Activated B cell treated with CpG ODN at 0.5 μM for 24 hours (primary cell): ENCODE measurements at regions of chr11 and their contacts with region 1.

Region 1: GRCh38 chr11:119067371-119068222 is at the start of gene VPS11:
- DNase-seq: peak; percentile 94
- ATAC-seq: peak; percentile 97
- H3K4me3 Mint-ChIP-seq: peak within 1 kb of the TSS; percentile 98
- H3K27ac Mint-ChIP-seq: peak within 1 kb of the TSS; percentile 98
- H3K4me1 Mint-ChIP-seq: peaks cover 34% of the 10 kb centered on the region
- H3K27me3 Mint-ChIP-seq: no peaks in the 10 kb centered on the region
- CTCF ChIP-seq: no peak
- total RNA-seq, gene VPS11: 49.6 and 53.6 TPM in 2 replicates

Region 2: GRCh38 chr11:119018074-119018938 is 49.3 kb before region 1 on chr11 and contains the starts of genes RPS25 and TRAPPC4:
- CTCF ChIA-PET with region 1: interaction called, 3 read pairs
- POLR2A ChIA-PET with region 1: interaction called, 23 read pairs
- intact Hi-C with region 1: loop called (anchors 1 kb)
- DNase-seq: peak; percentile 90
- ATAC-seq: peak; percentile 87
- H3K4me3 Mint-ChIP-seq: peak within 1 kb of the TSS; percentile 99
- H3K27ac Mint-ChIP-seq: peak within 1 kb of the TSS; percentile 100
- H3K4me1 Mint-ChIP-seq: peaks cover 54% of the 10 kb centered on the region
- H3K27me3 Mint-ChIP-seq: no peaks in the 10 kb centered on the region
- CTCF ChIP-seq: no peak
- total RNA-seq, gene RPS25: 2,191 and 2,534 TPM in 2 replicates
- total RNA-seq, gene TRAPPC4: 56.8 and 60.1 TPM in 2 replicates

Region 3: GRCh38 chr11:119051440-119052162 is 16.0 kb before region 1 on chr11:
- CTCF ChIA-PET with region 1: interaction called, 9 read pairs
- POLR2A ChIA-PET with region 1: interaction called, 62 read pairs
- intact Hi-C with region 1: loop called (anchors 2 kb)
- DNase-seq: peak; percentile 47
- ATAC-seq: peak; percentile 85
- H3K4me3 Mint-ChIP-seq: peak overlapping the region; percentile 39
- H3K27ac Mint-ChIP-seq: peak overlapping the region; percentile 71
- H3K4me1 Mint-ChIP-seq: peaks cover 40% of the 10 kb centered on the region
- H3K27me3 Mint-ChIP-seq: no peaks in the 10 kb centered on the region
- CTCF ChIP-seq: no peak

Region 4: DNA sequence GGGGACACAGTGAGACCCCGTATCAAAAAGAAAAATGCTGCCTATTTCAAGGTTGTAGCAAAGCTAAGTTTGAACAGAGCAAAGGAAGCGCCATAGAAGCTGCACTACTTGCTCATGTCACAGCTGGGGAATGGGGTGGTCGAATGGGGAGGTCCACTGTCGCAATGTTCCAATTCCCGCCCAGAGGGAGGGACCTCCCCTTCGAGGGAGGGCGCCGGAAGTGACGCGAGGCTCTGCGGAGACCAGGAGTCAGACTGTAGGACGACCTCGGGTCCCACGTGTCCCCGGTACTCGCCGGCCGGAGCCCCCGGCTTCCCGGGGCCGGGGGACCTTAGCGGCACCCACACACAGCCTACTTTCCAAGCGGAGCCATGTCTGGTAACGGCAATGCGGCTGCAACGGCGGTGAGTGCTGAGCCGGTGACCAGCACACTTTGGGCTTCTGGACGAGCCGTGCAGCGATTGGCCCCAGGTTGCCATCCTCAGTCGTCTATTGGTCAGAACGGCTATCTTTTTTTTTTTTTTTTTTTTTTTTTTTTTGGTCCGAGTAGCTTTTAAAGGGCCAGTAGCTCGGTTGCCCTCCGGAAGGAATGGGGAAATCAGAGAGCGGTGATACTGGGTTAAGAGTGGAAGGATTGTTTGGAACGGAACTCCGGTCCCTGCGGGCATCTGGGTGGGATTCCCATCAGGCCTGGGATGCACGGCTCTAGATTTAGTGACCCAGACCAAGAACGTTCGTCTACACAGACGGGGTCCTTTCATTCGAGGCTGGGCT is 17.3 kb after region 1 on chr11 and contains the start of gene HMBS:
- CTCF ChIA-PET with region 1: interaction called, 3 read pairs
- POLR2A ChIA-PET with region 1: interaction called, 40 read pairs
- intact Hi-C with region 1: loop called (anchors 1 kb)
- DNase-seq: peak; percentile 92
- ATAC-seq: peak; percentile 90
- H3K4me3 Mint-ChIP-seq: peak within 1 kb of the TSS; percentile 95
- H3K27ac Mint-ChIP-seq: peak within 1 kb of the TSS; percentile 93
- H3K4me1 Mint-ChIP-seq: peaks cover 12% of the 10 kb centered on the region
- H3K27me3 Mint-ChIP-seq: no peaks in the 10 kb centered on the region
- CTCF ChIP-seq: no peak
- total RNA-seq, gene HMBS: 17.5 and 26.9 TPM in 2 replicates

Region 5: DNA sequence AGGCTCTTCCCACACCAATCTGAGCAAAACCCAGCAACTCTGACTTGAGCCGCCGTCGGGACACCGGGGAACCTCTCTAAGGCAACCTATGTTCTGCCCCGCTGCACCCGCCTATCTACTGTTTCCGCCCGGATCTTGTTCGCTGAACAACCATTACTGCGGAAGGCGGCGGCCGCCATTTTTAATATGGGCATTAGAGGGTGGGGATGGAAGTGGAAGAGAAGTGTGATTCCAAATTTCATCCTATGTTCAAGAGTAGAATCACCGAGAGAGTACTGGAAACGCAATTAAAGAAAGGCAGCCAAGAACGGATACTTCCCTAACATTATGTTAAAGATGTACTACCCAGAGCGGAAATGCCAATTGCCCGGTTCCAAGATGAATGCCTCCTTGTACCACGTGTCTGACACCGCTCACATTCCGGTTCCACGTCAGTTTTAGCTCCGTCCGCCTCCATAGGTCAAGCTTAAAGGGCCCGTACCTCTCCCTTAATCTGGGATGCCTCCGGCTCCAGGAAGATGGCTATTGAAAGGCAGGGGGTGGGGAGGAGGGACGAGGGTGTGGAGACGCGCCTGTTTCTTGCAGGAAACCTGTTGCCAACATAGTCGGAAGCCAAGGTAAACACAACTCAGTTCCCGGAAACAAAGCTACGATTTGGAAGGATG is 34.3 kb after region 1 on chr11 and contains the start of gene DPAGT1:
- CTCF ChIA-PET with region 1: interaction called, 4 read pairs
- POLR2A ChIA-PET with region 1: interaction called, 27 read pairs
- intact Hi-C with region 1: loop called (anchors 1 kb)
- DNase-seq: peak; percentile 64
- ATAC-seq: peak; percentile 87
- H3K4me3 Mint-ChIP-seq: peak within 1 kb of the TSS; percentile 96
- H3K27ac Mint-ChIP-seq: peak within 1 kb of the TSS; percentile 96
- H3K4me1 Mint-ChIP-seq: peaks cover 58% of the 10 kb centered on the region
- H3K27me3 Mint-ChIP-seq: no peaks in the 10 kb centered on the region
- CTCF ChIP-seq: no peak
- total RNA-seq, gene DPAGT1: 31.0 and 33.1 TPM in 2 replicates

Region 6: GRCh38 chr11:119134389-119134978 is 66.9 kb after region 1 on chr11:
- CTCF ChIA-PET with region 1: no interaction called
- POLR2A ChIA-PET with region 1: interaction called, 15 read pairs
- intact Hi-C with region 1: no loop called
- DNase-seq: no peak
- ATAC-seq: peak; percentile 47
- H3K4me3 Mint-ChIP-seq: no peak overlapping the region
- H3K27ac Mint-ChIP-seq: no peak overlapping the region
- H3K4me1 Mint-ChIP-seq: no peaks in the 10 kb centered on the region
- H3K27me3 Mint-ChIP-seq: peaks cover 3% of the 10 kb centered on the region
- CTCF ChIP-seq: no peak

Region 7: GRCh38 chr11:119323538-119324033 is 256.0 kb after region 1 on chr11:
- CTCF ChIA-PET with region 1: no interaction called
- POLR2A ChIA-PET with region 1: interaction called, 3 read pairs
- intact Hi-C with region 1: loop called (anchors 2 kb)
- DNase-seq: peak; percentile 57
- ATAC-seq: no peak
- H3K4me3 Mint-ChIP-seq: peak overlapping the region; percentile 44
- H3K27ac Mint-ChIP-seq: no peak overlapping the region
- H3K4me1 Mint-ChIP-seq: peaks cover 30% of the 10 kb centered on the region
- H3K27me3 Mint-ChIP-seq: peaks cover 11% of the 10 kb centered on the region
- CTCF ChIP-seq: peak; percentile 61